ENCODE measurements at regions of chr12 and their contacts with region 1.

Region 1: GRCh38 chr12:64571411-64571810 is 38.9 kb upstream of the RASSF3 start:
- DNase-seq: no peak
- ATAC-seq: peak; percentile 44
- H3K4me3 Mint-ChIP-seq: no peak overlapping the region
- H3K27ac Mint-ChIP-seq: peak overlapping the region; percentile 30
- H3K4me1 Mint-ChIP-seq: peaks cover 28% of the 10 kb centered on the region
- H3K27me3 Mint-ChIP-seq: no peaks in the 10 kb centered on the region

Region 2: GRCh38 chr12:64510667-64511066 is 60.7 kb before region 1 on chr12:
- CTCF ChIA-PET with region 1: no interaction called
- POLR2A ChIA-PET with region 1: no interaction called
- intact Hi-C with region 1: no loop called
- DNase-seq: no peak
- ATAC-seq: peak; percentile 73
- H3K4me3 Mint-ChIP-seq: no peak overlapping the region
- H3K27ac Mint-ChIP-seq: no peak overlapping the region
- H3K4me1 Mint-ChIP-seq: peaks cover 2% of the 10 kb centered on the region
- H3K27me3 Mint-ChIP-seq: no peaks in the 10 kb centered on the region

Region 3: GRCh38 chr12:64583771-64584421 is 12.5 kb after region 1 on chr12:
- CTCF ChIA-PET with region 1: interaction called, 25 read pairs
- POLR2A ChIA-PET with region 1: interaction called, 4 read pairs
- intact Hi-C with region 1: no loop called
- DNase-seq: no peak
- ATAC-seq: peak; percentile 39
- H3K4me3 Mint-ChIP-seq: peak overlapping the region; percentile 53
- H3K27ac Mint-ChIP-seq: peak overlapping the region; percentile 85
- H3K4me1 Mint-ChIP-seq: peaks cover 27% of the 10 kb centered on the region
- H3K27me3 Mint-ChIP-seq: no peaks in the 10 kb centered on the region